ENCODE measurements at regions of chr9 and their contacts with region 1.

Region 1: DNA sequence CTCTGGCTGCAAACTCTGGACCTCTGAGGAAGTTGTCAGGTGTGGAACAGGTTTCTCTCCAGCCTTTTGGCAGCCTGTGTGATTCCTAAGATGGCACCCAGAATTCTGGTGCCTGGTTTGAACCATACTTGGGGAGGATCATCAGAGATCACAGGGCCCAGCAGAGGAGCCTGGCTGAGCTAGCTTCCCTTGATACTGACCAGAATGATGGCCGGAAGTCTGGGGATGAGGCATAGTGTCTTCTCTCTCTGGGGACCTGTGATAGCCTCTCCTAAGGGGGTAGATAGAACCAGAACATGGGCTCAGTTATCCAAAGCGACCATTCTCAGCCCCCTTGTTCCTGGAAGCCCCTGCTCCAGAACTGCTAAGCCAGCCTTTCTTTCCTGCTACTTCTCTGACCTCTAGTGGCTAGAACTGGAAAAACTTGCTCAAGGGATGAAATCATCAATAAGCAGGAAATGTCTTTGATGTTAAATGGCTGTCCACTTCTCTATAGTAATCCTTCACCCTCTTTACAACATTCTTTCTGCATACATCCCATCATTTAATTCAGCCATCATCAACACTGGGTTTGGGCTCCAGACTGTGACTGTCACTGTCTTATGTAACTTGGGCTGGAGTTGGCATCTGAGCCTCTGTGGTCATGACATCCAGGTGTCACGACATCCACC is 55.1 kb downstream of the C9orf152 start:
- DNase-seq: no peak
- ATAC-seq: no peak

Region 2: DNA sequence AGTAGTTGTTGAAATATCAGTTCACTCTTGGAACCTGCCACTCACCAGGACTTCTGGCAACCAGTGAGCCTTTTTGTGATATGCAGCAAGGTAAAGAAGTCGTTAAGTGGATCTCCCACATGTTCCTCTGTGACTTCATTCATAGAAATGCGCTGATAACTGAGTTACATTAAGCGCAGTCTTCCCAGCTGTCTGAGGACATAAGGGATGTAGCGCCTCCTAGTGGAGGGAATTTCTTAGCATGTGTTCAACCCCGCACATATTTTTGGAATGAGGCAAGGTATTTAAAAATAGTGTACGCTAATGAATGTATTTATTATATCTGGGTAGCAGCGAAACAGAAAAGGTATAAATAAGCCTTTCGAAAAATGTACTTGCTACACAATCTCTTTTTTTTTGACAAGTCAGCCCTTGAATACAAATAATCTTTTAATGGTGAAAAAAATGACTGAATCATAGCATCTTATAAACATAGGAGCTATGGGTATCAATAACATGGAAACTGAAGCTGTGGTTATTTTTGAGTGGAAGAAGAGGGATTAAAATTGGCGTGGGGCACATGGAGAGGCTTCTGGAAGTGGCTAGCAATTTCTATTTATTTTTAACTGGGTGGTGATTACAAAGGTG is 334.9 kb before region 1 on chr9:
- intact Hi-C with region 1: loop called (anchors 10 kb)
- DNase-seq: no peak
- ATAC-seq: peak; percentile 81

Region 3: DNA sequence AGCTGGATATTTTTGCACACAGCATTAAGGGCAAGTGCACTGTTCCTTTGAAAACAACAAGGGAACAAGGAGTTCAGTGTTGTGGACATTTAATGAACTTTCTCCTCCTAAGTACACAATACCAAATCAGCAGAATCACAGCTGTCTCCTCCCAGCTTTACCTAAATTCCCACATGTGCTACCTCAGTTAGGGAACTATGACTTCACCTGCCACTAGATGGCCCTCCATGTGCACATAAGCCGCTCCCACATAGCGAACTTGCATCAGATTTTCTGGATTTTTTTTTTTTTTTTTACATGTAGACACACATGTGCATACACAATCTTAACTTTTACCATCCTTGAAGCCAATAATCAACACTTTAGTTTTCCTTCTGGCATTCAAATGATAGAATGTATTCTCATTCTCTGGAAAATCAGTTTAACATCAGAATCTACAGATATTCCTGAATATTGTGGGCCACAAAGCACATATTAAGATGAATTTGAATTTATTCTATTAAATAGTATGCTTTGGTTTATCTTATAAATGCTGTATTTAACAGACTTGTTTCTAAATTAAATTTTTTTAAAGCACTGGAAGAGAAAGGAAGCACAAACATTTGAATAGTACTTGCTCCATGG is 249.2 kb before region 1 on chr9:
- intact Hi-C with region 1: loop called (anchors 1 kb)
- DNase-seq: no peak
- ATAC-seq: peak; percentile 56

Region 4: DNA sequence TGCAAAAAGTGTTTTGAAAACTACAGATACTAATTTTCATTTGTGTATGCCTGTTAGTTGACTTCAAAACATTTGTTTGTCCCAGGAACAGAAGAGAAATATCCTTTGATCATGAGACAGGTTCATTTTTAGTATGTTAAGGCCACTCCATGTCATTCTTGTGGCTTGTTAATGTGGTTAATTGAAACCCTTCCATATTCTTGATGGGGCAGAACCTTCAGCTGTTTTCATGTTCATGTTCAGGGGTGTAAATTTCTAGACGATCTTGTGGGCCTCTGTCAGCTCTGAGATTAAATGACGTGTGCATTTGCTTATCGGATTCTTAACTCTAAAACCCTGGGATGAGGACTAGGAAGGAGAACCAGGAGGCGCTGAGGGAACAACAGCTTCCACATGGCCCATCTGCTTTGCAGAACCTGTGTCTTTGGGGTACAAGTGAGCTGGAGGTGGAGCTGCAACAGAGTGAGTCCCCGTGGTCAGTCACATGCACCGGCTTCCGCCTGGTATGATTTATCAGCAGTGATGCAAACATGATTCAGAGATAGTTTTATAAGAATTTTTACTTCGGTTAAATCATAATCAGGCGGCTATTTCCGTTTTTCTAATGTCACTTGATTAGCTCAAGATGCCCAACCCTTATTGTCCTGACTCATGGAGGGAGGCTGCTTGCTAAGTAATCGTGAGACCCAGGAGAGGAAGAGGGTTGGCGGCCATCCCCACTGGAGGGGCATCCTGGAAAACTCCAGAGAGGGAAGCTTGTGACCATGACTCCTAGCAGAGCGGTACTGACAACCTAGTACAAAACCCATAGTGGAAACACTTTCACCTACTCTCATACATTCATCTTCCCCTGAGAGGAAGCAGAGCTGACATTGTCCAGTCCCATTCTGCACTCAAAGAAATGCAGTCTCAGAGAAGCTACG is 83.3 kb before region 1 on chr9:
- intact Hi-C with region 1: loop called (anchors 5 kb)
- DNase-seq: no peak
- ATAC-seq: peak; percentile 52

Region 5: DNA sequence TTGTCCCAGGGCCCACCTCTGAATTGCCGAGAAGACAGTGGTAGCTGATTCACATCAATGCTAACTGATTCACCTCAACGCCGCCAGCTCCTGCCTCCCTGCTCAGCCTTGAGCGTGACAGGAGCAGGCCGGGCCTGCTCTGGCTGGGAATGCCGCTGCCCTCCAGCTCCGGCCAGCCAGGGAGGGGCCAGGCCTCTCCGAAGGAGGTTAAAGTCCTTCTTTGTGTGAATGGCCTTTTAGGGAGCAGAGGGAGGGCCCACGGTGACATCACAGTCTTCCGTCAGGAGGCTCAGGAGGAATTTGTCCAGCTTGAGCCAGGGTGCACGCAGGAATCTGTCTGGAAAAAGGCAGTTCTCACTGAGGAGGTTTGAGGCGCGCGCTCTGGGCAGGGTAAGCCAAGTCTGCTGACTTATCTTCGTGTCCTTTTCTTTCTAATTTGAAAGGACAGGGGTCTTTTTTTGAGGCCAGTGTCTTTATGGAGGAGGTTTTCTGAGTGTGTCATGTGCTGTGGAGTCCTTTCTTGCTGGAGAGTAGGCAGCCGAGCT is 27.6 kb before region 1 on chr9:
- intact Hi-C with region 1: loop called (anchors 2 kb)
- DNase-seq: peak; percentile 89
- ATAC-seq: peak; percentile 90